PC-9 (cell line): ENCODE measurements at regions of chr1 and their contacts with region 1.

Region 1: GRCh38 chr1:6923955-6924881 is 139.0 kb downstream of the CAMTA1 start:
- DNase-seq: no peak
- H3K4me3 ChIP-seq: no peak overlapping the region
- H3K27ac ChIP-seq: no peak overlapping the region
- H3K4me1 ChIP-seq: no peaks in the 10 kb centered on the region
- H3K27me3 ChIP-seq: peaks cover 43% of the 10 kb centered on the region
- CTCF ChIP-seq: no peak

Region 2: DNA sequence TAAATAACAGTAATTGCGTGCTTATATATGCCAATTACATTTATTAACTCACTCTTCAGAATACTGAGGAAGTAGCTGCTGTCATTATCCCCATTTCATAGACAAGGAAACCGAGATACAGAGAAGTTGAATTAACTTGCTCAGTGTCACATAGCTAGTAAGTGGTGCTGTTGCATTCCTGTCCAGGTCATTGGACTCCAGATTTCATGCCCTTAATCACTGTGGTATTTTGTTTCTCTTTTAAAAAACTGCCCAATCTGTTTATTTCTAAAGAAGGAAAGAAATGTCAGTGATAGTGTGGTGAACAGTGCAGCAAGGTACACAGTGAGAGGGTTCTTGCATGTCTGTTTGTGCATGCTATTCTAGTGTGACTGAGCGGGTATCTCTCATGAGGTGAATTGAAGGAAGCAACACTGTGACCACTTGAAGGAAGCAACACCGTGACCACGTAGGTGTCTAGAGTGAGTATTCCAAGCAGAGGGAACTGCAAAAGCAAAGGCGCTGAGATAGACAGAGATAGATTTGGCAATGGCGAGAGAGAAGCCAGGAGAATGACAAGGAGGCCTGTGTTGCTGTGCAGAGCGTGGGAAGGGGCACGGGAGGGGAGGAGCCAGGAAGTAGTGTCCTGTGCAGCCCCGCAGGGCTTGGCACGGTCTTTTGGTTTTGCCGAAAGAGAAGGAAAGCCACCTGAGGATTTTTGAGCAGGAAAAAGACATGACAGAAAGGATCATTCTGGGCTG is 43.1 kb before region 1 on chr1:
- CTCF ChIA-PET with region 1: no interaction called
- POLR2A ChIA-PET with region 1: no interaction called
- intact Hi-C with region 1: no loop called
- DNase-seq: no peak
- H3K4me3 ChIP-seq: no peak overlapping the region
- H3K27ac ChIP-seq: no peak overlapping the region
- H3K4me1 ChIP-seq: no peaks in the 10 kb centered on the region
- H3K27me3 ChIP-seq: no peaks in the 10 kb centered on the region
- CTCF ChIP-seq: no peak

Region 3: GRCh38 chr1:7265771-7266648 is 341.8 kb after region 1 on chr1:
- CTCF ChIA-PET with region 1: no interaction called
- POLR2A ChIA-PET with region 1: interaction called, 10 read pairs
- intact Hi-C with region 1: no loop called
- DNase-seq: peak in 1 of 2 experiments; percentile 11
- H3K4me3 ChIP-seq: no peak overlapping the region
- H3K27ac ChIP-seq: no peak overlapping the region
- H3K4me1 ChIP-seq: no peaks in the 10 kb centered on the region
- H3K27me3 ChIP-seq: peaks cover 30% of the 10 kb centered on the region
- CTCF ChIP-seq: no peak